Motor neuron (in vitro differentiated cells): ENCODE measurements at regions of chr18 and their contacts with region 1.

Region 1: GRCh38 chr18:36015629-36016028 is 43.1 kb downstream of the RMP24 start:
- ATAC-seq: no peak
- H3K4me3 ChIP-seq: no peak overlapping the region
- H3K27ac ChIP-seq: no peak overlapping the region
- H3K4me1 ChIP-seq: no peaks in the 10 kb centered on the region

Region 2: DNA sequence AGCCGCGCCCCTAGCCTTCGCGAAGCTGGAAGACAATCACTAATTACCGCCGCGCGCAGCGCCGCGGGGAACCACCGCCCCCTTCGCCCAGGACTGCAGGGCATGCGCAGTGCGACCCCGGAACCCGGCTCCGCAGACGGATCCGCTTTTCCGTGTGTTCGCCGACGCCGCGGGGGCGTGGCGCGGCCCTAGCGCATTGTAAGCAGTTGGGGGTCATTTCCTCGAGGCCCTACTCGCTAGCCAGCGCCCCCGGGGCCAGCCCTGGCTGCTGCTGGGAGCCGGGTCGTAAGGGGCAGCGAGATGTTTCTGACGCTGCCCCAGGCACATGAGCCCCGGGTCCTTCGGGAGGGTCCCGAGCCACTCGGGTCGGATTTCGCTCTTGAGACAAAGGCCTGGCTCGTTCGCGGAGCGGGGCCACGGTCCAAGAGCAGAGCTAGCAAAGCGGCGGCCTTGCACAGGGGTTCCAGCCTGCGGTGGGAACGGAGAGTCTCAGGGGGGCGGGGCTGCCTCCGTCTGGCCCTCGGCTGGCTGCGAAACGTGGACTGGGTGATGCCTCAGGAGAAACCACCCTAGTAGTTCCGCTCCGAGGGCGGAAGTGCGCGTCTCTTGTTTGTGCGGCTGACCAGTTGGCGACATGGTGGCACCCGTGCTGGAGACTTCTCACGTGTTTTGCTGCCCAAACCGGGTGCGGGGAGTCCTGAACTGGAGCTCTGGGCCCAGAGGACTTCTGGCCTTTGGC is 113.8 kb after region 1 on chr18 and contains the starts of genes ELP2 and SLC39A6:
- in situ Hi-C with region 1: loop called in 2 of 9 experiments (anchors 25 kb)
- ATAC-seq: peak; percentile 90 to 94 (median 92)
- H3K4me3 ChIP-seq: peak within 1 kb of the TSS; percentile 74 to 100 (median 83)
- H3K27ac ChIP-seq: peak within 1 kb of the TSS; percentile 99 to 100
- H3K4me1 ChIP-seq: peaks cover 14 to 19% of the 10 kb centered on the region in 2 donors
- total RNA-seq, gene ELP2: 47.7 to 80.1 (median 66.3) TPM
- total RNA-seq, gene SLC39A6: 34.9 to 146 (median 99.8) TPM

Region 3: DNA sequence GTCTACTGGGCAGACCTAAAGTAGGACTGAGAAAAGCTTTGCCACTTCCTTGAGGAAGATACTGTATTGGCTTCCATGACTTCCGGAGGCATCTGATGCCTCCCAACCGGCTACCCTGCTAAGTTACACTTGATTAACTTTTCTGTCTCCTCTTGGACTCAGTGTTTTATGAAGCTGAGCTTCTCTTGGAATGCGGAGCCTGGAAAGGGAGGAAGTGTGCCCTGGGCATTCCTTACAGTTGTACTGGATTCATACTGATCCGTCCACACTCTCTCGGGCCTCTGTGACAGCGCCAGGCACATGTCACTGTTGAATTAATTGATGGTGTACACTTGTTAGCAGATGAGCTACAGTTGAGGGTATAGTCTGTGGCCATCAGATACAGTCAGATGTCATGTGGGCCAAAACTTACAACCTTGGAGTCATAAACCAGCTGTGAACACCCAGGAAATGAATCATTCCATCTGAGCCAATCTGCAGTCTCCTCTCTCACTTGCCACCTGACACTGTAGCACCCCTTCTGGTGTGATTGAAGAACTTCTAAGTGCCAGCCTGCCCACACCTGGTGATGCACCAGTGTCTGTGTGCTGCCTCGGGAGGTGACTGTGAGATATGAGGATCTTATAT is 404.4 kb after region 1 on chr18:
- in situ Hi-C with region 1: no loop called
- ATAC-seq: peak in 3 of 8 experiments; percentile 5 to 7 (median 5)
- H3K4me3 ChIP-seq: no peak overlapping the region
- H3K27ac ChIP-seq: no peak overlapping the region
- H3K4me1 ChIP-seq: peaks cover 24 to 31% of the 10 kb centered on the region in 2 donors